ENCODE measurements at regions of chr6 and their contacts with region 1.

Region 1: GRCh38 chr6:45421709-45422502 is 44.2 kb upstream of the SUPT3H start:
- DNase-seq: peak in 7 of 9 donors; percentile 41 to 69 (median 44)
- ATAC-seq: peak; percentile 52
- H3K4me3 ChIP-seq: peak overlapping the region; percentile 80
- H3K4me3 Mint-ChIP-seq: peak overlapping the region; percentile 89 to 99 (median 94)
- H3K27ac ChIP-seq: peak overlapping the region; percentile 53
- H3K27ac Mint-ChIP-seq: peak overlapping the region; percentile 54 to 95 (median 81)
- H3K4me1 ChIP-seq: peaks cover 17 to 24% of the 10 kb centered on the region in 2 donors
- H3K4me1 Mint-ChIP-seq: peaks cover 13 to 52% (median 43%) of the 10 kb centered on the region in 7 donors
- H3K27me3 ChIP-seq: peaks cover 8% of the 10 kb centered on the region in 2 donors
- H3K27me3 Mint-ChIP-seq: peaks cover 0 to 48% (median 26%) of the 10 kb centered on the region in 5 donors

Region 2: DNA sequence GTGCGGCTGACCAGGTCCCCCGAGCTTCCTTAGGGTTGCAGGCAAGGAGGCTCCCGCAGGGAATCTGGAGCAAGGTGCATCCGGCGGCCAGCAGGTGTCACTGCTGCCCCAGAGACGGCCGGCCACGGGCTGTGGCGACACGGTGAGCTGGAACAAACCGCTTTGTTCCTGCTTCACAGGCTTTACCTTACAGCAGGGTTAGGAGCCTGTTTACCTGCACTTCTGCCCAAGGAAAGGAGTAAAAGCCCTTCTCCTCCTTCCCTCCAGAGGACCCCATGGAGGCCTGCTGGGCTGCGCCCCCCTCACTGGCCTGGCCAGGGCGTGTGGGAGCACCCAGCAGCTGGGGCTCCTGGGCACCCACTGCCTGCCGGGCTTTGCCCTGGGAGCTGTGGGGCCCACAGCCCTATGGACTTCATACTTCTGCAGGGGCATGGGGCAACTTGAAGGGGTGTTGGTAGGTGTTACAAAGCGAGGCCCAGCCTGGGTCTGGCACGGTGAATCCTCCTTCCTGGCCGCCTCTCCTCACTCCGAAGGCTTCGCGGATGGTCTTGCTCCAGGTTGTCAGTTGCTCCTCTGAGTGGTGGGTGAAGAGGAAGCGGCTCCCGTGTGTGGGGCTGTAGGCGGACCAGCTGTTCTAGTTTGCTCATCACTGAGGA is 946.0 kb before region 1 on chr6:
- CTCF ChIA-PET with region 1: interaction called, 4 read pairs
- POLR2A ChIA-PET with region 1: no interaction called
- intact Hi-C with region 1: loop called (anchors 5 kb)
- DNase-seq: peak; percentile 38 to 78 (median 64)
- ATAC-seq: peak; percentile 82
- H3K4me3 ChIP-seq: no peak overlapping the region
- H3K4me3 Mint-ChIP-seq: no peak overlapping the region
- H3K27ac ChIP-seq: no peak overlapping the region
- H3K27ac Mint-ChIP-seq: no peak overlapping the region
- H3K4me1 ChIP-seq: peaks cover 0 to 9% of the 10 kb centered on the region in 2 donors
- H3K4me1 Mint-ChIP-seq: peaks cover 0 to 2% (median 0%) of the 10 kb centered on the region in 7 donors
- H3K27me3 ChIP-seq: no peaks in the 10 kb centered on the region
- H3K27me3 Mint-ChIP-seq: peaks cover 0 to 8% (median 0%) of the 10 kb centered on the region in 5 donors

Region 3: GRCh38 chr6:44858998-44859397 is 562.9 kb before region 1 on chr6:
- CTCF ChIA-PET with region 1: no interaction called
- POLR2A ChIA-PET with region 1: no interaction called
- intact Hi-C with region 1: loop called in 1 of 2 experiments (anchors 1 kb)
- DNase-seq: peak in 5 of 9 donors; percentile 13 to 39 (median 15)
- ATAC-seq: peak; percentile 50
- H3K4me3 ChIP-seq: no peak overlapping the region
- H3K4me3 Mint-ChIP-seq: no peak overlapping the region
- H3K27ac ChIP-seq: no peak overlapping the region
- H3K27ac Mint-ChIP-seq: peak overlapping the region in 1 of 9 donors; percentile 4
- H3K4me1 ChIP-seq: peaks cover 0 to 13% of the 10 kb centered on the region in 2 donors
- H3K4me1 Mint-ChIP-seq: peaks cover 17 to 76% (median 60%) of the 10 kb centered on the region in 7 donors
- H3K27me3 ChIP-seq: no peaks in the 10 kb centered on the region
- H3K27me3 Mint-ChIP-seq: no peaks in the 10 kb centered on the region

Region 4: GRCh38 chr6:45036103-45036502 is 385.8 kb before region 1 on chr6:
- CTCF ChIA-PET with region 1: interaction called, 3 read pairs
- POLR2A ChIA-PET with region 1: no interaction called
- intact Hi-C with region 1: loop called in 1 of 2 experiments (anchors 5 kb)
- DNase-seq: no peak
- ATAC-seq: no peak
- H3K4me3 ChIP-seq: no peak overlapping the region
- H3K4me3 Mint-ChIP-seq: no peak overlapping the region
- H3K27ac ChIP-seq: no peak overlapping the region
- H3K27ac Mint-ChIP-seq: peak overlapping the region in 2 of 9 donors; percentile 5 to 46
- H3K4me1 ChIP-seq: no peaks in the 10 kb centered on the region
- H3K4me1 Mint-ChIP-seq: peaks cover 0 to 12% (median 4%) of the 10 kb centered on the region in 7 donors
- H3K27me3 ChIP-seq: no peaks in the 10 kb centered on the region
- H3K27me3 Mint-ChIP-seq: no peaks in the 10 kb centered on the region

Region 5: GRCh38 chr6:45310118-45310788 is 111.7 kb before region 1 on chr6:
- CTCF ChIA-PET with region 1: no interaction called
- POLR2A ChIA-PET with region 1: interaction called, 6 read pairs
- intact Hi-C with region 1: loop called in 1 of 2 experiments (anchors 5 kb)
- DNase-seq: peak in 8 of 9 donors; percentile 24 to 71 (median 60)
- ATAC-seq: peak; percentile 76
- H3K4me3 ChIP-seq: peak overlapping the region; percentile 32
- H3K4me3 Mint-ChIP-seq: peak overlapping the region; percentile 63 to 84 (median 80)
- H3K27ac ChIP-seq: peak overlapping the region; percentile 44
- H3K27ac Mint-ChIP-seq: peak overlapping the region; percentile 85 to 95 (median 90)
- H3K4me1 ChIP-seq: peaks cover 14 to 33% of the 10 kb centered on the region in 2 donors
- H3K4me1 Mint-ChIP-seq: peaks cover 39 to 86% (median 78%) of the 10 kb centered on the region in 7 donors
- H3K27me3 ChIP-seq: no peaks in the 10 kb centered on the region
- H3K27me3 Mint-ChIP-seq: no peaks in the 10 kb centered on the region

Region 6: GRCh38 chr6:45495429-45496084 is 73.7 kb after region 1 on chr6:
- CTCF ChIA-PET with region 1: interaction called, 3 read pairs
- POLR2A ChIA-PET with region 1: no interaction called
- intact Hi-C with region 1: loop called in 1 of 2 experiments (anchors 2 kb)
- DNase-seq: peak in 7 of 9 donors; percentile 40 to 61 (median 53)
- ATAC-seq: peak; percentile 76
- H3K4me3 ChIP-seq: no peak overlapping the region
- H3K4me3 Mint-ChIP-seq: peak overlapping the region; percentile 54 to 83 (median 62)
- H3K27ac ChIP-seq: no peak overlapping the region
- H3K27ac Mint-ChIP-seq: peak overlapping the region; percentile 5 to 91 (median 70)
- H3K4me1 ChIP-seq: peaks cover 34 to 37% of the 10 kb centered on the region in 2 donors
- H3K4me1 Mint-ChIP-seq: peaks cover 39 to 55% (median 50%) of the 10 kb centered on the region in 7 donors
- H3K27me3 ChIP-seq: no peaks in the 10 kb centered on the region
- H3K27me3 Mint-ChIP-seq: no peaks in the 10 kb centered on the region

Region 7: DNA sequence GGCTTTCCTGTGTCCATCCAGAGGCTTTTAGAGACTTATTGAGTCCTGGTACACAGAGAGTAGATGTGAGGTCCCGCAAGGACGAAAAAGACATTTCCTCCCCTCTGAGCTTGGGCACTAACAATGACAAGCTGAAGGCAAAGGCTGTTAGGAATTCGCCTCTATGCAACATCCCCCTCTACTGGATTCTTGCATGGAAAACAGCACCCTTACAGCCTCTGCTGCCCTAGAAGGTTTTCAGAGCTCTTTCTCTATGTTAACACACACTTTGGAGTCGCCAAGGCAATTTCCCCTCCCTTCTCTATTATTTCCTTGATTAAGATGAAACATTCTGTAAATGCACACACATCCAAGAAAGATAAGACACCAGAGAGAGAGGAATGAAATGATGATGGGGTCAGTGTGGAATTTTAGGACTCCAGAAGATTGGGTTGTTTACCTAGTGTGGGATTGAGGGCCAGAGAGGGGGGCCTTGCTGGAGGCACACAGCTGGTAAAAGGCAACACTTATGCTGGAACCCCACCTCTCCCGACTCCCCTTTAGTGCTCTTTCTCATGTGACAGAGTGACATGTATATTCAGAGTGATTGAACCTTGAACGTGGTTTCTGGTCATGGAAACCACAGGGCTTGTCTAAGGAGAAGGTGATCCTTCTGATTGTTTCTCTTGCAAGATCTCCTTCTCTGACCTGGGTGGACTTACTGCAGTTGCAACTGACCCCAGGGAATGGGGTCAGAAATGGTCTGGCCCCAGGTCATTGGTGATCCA is 293.0 kb after region 1 on chr6:
- CTCF ChIA-PET with region 1: interaction called, 17 read pairs
- POLR2A ChIA-PET with region 1: interaction called, 6 read pairs
- intact Hi-C with region 1: loop called (anchors 1 kb)
- DNase-seq: peak in 7 of 9 donors; percentile 51 to 74 (median 68)
- ATAC-seq: peak; percentile 84
- H3K4me3 ChIP-seq: no peak overlapping the region
- H3K4me3 Mint-ChIP-seq: peak overlapping the region in 5 of 10 donors; percentile 16 to 64 (median 47)
- H3K27ac ChIP-seq: no peak overlapping the region
- H3K27ac Mint-ChIP-seq: peak overlapping the region in 3 of 9 donors; percentile 32 to 75 (median 70)
- H3K4me1 ChIP-seq: no peaks in the 10 kb centered on the region
- H3K4me1 Mint-ChIP-seq: peaks cover 8 to 46% (median 12%) of the 10 kb centered on the region in 7 donors
- H3K27me3 ChIP-seq: no peaks in the 10 kb centered on the region
- H3K27me3 Mint-ChIP-seq: no peaks in the 10 kb centered on the region

Measured in naive thymus-derived CD4-positive, alpha-beta T cell (primary cell).